ENCODE measurements at regions of chr11 and their contacts with region 1.

Region 1: DNA sequence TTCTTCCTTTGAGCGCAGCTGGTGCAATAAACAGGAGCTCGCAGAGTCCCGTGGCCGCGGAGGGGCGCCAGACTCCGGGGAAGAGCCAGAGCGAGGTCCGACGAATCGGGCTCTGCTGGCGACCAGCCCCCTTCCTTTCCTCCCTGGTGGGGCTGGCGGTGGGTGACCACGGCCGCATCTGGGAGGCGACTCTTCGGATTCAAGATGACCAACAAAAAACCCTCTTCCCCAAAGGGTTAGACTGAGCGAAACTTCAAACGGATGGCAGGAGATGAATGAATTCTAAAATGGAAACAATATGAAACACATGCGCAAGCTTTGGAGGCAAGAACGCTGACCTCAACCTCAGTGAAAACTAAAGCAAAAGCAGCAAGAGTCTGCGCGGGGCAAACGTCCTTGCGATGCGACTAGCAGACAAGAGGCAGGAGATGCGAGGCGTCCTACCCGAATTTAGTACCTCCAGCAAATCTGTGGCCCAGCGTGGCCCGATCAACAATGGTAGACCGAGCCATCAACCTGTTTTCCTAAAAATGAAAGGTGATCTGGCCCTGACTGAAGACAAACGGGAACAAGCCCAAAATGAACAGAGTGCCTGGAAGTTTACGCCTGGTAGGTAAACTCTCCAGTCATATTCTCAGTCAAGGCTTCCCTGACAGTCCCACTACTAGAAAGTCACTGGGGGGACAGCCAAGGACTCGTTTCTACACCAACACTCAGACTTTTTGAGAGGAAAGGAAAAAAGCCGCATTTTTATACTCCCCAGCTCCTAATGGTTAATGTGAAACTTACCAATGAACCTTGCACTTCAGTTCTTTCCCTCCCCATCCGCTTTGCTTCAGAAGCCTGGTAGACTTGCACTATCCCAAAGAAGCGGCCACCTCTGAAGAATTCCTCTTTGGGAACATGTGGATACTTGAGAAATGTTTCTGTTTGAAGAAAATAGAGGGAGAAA is 11.6 kb downstream of the MMP3 start:
- DNase-seq: peak; percentile 70 to 84
- ATAC-seq: peak; percentile 52
- H3K4me3 ChIP-seq: no peak overlapping the region
- H3K27ac ChIP-seq: no peak overlapping the region
- H3K4me1 ChIP-seq: peaks cover 0 to 2% of the 10 kb centered on the region in 2 donors
- H3K27me3 ChIP-seq: peaks cover 0 to 2% of the 10 kb centered on the region in 2 donors

Region 2: GRCh38 chr11:102850973-102851745 is 19.4 kb after region 1 on chr11:
- intact Hi-C with region 1: no loop called
- DNase-seq: no peak
- ATAC-seq: no peak
- H3K4me3 ChIP-seq: no peak overlapping the region
- H3K27ac ChIP-seq: no peak overlapping the region
- H3K4me1 ChIP-seq: no peaks in the 10 kb centered on the region
- H3K27me3 ChIP-seq: no peaks in the 10 kb centered on the region

Region 3: GRCh38 chr11:102933627-102934026 is 101.9 kb after region 1 on chr11:
- intact Hi-C with region 1: loop called in 1 of 2 experiments (anchors 10 kb)
- DNase-seq: no peak
- ATAC-seq: no peak
- H3K4me3 ChIP-seq: no peak overlapping the region
- H3K27ac ChIP-seq: no peak overlapping the region
- H3K4me1 ChIP-seq: no peaks in the 10 kb centered on the region
- H3K27me3 ChIP-seq: no peaks in the 10 kb centered on the region

Region 4: GRCh38 chr11:102940714-102941588 is 109.2 kb after region 1 on chr11:
- intact Hi-C with region 1: loop called (anchors 5 to 10 kb)
- DNase-seq: no peak
- ATAC-seq: no peak
- H3K4me3 ChIP-seq: no peak overlapping the region
- H3K27ac ChIP-seq: no peak overlapping the region
- H3K4me1 ChIP-seq: no peaks in the 10 kb centered on the region
- H3K27me3 ChIP-seq: no peaks in the 10 kb centered on the region

Region 5: GRCh38 chr11:103043826-103044624 is 212.3 kb after region 1 on chr11:
- intact Hi-C with region 1: no loop called
- DNase-seq: no peak
- ATAC-seq: no peak
- H3K4me3 ChIP-seq: no peak overlapping the region
- H3K27ac ChIP-seq: no peak overlapping the region
- H3K4me1 ChIP-seq: no peaks in the 10 kb centered on the region
- H3K27me3 ChIP-seq: no peaks in the 10 kb centered on the region

Measured in aorta (tissue), 5 donors.